ENCODE measurements at regions of chr14 and their contacts with region 1.

Region 1: DNA sequence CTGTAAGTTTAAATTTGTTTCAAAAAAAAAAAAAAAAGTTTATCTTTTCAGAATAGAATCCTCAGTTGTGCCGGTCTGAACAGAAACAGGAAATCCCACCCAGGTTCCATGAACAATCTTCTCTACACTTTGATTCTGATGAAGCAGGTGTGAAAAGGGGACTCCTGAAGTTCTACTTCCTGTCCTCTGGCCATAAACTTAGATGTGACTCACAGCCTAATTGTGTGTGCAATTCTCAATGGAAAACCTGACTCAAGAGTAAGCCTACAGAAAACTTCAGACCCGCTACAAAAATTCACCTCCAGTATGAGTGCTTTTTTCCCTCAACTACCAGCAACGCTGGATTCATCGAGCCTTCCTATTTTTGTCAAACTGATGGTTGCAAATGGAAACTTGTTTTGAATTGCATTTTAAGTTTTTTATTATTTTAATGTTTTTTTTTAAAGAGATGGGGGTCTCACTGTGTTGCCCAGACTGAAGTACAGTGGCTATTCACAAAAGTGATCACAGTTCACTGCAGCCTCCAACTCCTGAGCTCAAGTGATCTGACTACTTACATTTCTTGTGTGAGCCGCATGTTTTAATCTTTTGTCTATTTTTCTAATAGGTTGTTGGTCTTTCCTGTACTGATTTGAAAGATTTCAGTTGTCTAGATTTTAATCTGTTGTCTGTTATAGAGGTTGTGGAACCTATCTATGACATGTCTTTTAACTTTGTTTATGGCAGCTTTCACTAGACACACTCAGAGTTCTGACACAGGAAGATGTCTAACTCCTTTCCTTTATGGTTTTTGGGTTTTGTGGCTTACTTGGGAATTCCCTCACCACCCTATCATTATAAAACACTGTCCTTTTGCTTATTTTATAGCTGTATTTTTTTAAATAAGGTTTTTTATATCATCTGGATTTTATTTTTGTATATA is 37.6 kb downstream of the ATG14 start:
- DNase-seq: peak; percentile 77
- ATAC-seq: peak; percentile 32; the same call in 1 of the 2 replicates
- H3K4me3 ChIP-seq: no peak overlapping the region
- H3K27ac ChIP-seq: no peak overlapping the region
- H3K4me1 ChIP-seq: peaks cover 3% of the 10 kb centered on the region; the same call in 1 of the 2 replicates
- H3K27me3 ChIP-seq: no peaks in the 10 kb centered on the region
- CTCF ChIP-seq: no peak
- POLR2A ChIP-seq: no peak
- RAD21 ChIP-seq: no peak

Region 2: GRCh38 chr14:55389330-55389729 is 15.3 kb after region 1 on chr14:
- CTCF ChIA-PET with region 1: no interaction called
- POLR2A ChIA-PET with region 1: interaction called, 22 read pairs
- dilution Hi-C with region 1: no loop called
- in situ Hi-C with region 1: no loop called
- intact Hi-C with region 1: no loop called
- DNase-seq: peak; percentile 94
- ATAC-seq: peak; percentile 86
- H3K4me3 ChIP-seq: no peak overlapping the region
- H3K27ac ChIP-seq: peak overlapping the region; percentile 87; the same call in 1 of the 2 replicates
- H3K4me1 ChIP-seq: peaks cover 8% of the 10 kb centered on the region
- H3K27me3 ChIP-seq: no peaks in the 10 kb centered on the region
- CTCF ChIP-seq: no peak
- POLR2A ChIP-seq: no peak
- RAD21 ChIP-seq: no peak

Measured in IMR-90 (cell line).